Adrenal gland (tissue), 19 donors: ENCODE measurements at regions of chr2 and their contacts with region 1.

Region 1: DNA sequence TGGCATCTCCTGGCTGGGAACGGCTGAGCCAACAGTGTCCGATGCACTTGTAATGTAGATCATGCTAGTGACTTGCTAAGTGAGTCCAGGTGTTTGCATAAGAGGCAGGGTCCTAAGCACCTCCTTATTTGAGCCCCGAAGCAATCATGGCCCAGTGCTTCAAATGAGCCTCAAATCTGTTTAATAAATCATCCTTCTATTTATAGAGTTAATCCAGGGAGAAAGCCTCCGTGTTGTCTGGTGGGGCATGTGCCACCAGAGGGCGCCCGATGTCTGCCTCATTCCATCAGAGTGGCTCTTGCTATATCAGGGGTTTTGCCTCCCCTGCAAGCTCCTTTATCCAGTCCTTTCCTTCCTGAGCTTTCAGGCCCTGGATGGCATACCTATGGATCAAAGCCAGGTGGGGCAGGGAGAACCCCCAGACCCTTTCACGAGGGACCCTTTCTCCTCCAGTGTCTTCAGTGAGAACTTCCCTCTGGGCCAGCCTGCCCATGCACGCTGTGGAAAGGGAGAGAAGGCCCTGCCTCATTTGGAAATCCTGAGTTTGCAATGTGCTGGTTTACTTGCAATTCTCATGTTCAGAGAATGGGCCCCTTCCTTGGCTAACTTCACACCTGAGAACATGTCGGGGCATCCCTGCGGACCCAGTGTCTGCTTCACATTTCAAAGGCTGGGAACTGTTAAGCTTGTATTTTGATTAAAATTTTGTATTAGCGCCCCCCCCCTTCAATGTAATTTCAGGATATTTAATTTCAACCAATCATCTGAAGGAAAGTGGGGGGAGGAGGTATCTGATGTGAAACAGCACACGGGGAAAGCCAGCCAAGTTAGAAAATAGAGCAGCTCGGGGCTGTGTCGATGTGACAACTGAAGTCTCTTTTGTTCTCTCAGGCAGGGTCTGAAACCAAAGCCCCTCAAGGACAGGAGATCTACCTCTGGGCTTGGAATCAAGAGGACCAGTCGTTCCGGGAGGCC is 39.7 kb downstream of the RDH14 start:
- DNase-seq: peak; percentile 72 to 93 (median 80)
- H3K4me3 ChIP-seq: no peak overlapping the region
- H3K27ac ChIP-seq: no peak overlapping the region
- H3K4me1 ChIP-seq: peaks cover 0 to 5% of the 10 kb centered on the region in 2 donors
- H3K27me3 ChIP-seq: no peaks in the 10 kb centered on the region
- CTCF ChIP-seq: peak; percentile 79 to 92 (median 86)
- POLR2A ChIP-seq: no peak

Region 2: GRCh38 chr2:17455343-17455742 is 1065.4 kb before region 1 on chr2:
- intact Hi-C with region 1: no loop called
- DNase-seq: no peak
- H3K4me3 ChIP-seq: no peak overlapping the region
- H3K27ac ChIP-seq: no peak overlapping the region
- H3K4me1 ChIP-seq: no peaks in the 10 kb centered on the region
- H3K27me3 ChIP-seq: no peaks in the 10 kb centered on the region
- CTCF ChIP-seq: no peak
- POLR2A ChIP-seq: no peak

Region 3: GRCh38 chr2:18749912-18750526 is 229.3 kb after region 1 on chr2:
- intact Hi-C with region 1: loop called (anchors 5 to 10 kb)
- DNase-seq: peak; percentile 42 to 76 (median 63)
- H3K4me3 ChIP-seq: no peak overlapping the region
- H3K27ac ChIP-seq: no peak overlapping the region
- H3K4me1 ChIP-seq: no peaks in the 10 kb centered on the region
- H3K27me3 ChIP-seq: no peaks in the 10 kb centered on the region
- CTCF ChIP-seq: peak; percentile 71 to 90 (median 85)
- POLR2A ChIP-seq: no peak